ENCODE measurements at regions of chr18 and their contacts with region 1.

Region 1: GRCh38 chr18:23503038-23503962 is at the start of gene RMC1:
- DNase-seq: peak; percentile 98
- H3K4me3 Mint-ChIP-seq: peak within 1 kb of the TSS; percentile 96
- H3K27ac Mint-ChIP-seq: peak within 1 kb of the TSS; percentile 87
- H3K4me1 Mint-ChIP-seq: peaks cover 17% of the 10 kb centered on the region
- H3K27me3 Mint-ChIP-seq: no peaks in the 10 kb centered on the region
- CTCF ChIP-seq: no peak
- total RNA-seq, gene RMC1: 31.0 and 33.7 TPM in 2 replicates

Region 2: DNA sequence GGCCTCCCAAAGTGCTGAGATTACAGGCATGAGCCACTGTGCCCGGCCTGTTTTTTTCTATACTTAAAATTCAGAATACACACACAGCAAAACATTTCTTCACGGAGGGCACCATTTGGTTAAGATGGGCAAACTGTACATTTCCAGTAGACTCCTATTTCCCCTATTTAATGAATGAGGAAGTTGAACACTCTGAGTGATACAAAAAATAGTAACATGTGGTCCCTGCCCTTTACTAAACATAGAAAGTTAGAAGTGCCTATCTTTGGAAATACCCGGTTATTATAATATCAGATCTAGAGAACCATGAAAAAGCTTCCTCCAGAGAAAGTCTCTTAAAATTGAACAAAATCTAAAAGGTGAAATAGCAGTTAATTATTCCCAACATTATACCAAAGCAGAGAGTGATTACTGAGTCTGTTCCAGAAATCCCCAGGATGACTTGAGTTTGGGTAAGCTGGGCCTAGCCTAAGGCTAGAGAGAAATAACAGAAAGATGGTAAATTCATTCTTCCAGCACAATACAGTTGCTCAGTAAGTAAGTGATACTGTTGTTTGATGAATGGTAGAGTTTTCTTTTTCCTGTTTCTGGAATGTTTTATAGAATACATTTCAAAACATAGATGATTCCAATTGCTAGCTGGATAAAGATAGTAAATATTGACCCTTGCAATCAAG is 23.3 kb before region 1 on chr18:
- CTCF ChIA-PET with region 1: no interaction called
- intact Hi-C with region 1: no loop called
- DNase-seq: no peak
- H3K4me3 Mint-ChIP-seq: no peak overlapping the region
- H3K27ac Mint-ChIP-seq: no peak overlapping the region
- H3K4me1 Mint-ChIP-seq: no peaks in the 10 kb centered on the region
- H3K27me3 Mint-ChIP-seq: no peaks in the 10 kb centered on the region
- CTCF ChIP-seq: no peak

Region 3: GRCh38 chr18:23547846-23548245 is 44.5 kb after region 1 on chr18:
- CTCF ChIA-PET with region 1: no interaction called
- intact Hi-C with region 1: no loop called
- DNase-seq: peak; percentile 54
- H3K4me3 Mint-ChIP-seq: peak overlapping the region; percentile 29
- H3K27ac Mint-ChIP-seq: peak overlapping the region; percentile 62
- H3K4me1 Mint-ChIP-seq: peaks cover 36% of the 10 kb centered on the region
- H3K27me3 Mint-ChIP-seq: no peaks in the 10 kb centered on the region
- CTCF ChIP-seq: no peak

Region 4: GRCh38 chr18:23710068-23710527 is 206.8 kb after region 1 on chr18:
- CTCF ChIA-PET with region 1: no interaction called
- intact Hi-C with region 1: loop called (anchors 5 kb)
- DNase-seq: peak; percentile 21
- H3K4me3 Mint-ChIP-seq: peak overlapping the region; percentile 38
- H3K27ac Mint-ChIP-seq: peak overlapping the region; percentile 73
- H3K4me1 Mint-ChIP-seq: peaks cover 11% of the 10 kb centered on the region
- H3K27me3 Mint-ChIP-seq: no peaks in the 10 kb centered on the region
- CTCF ChIP-seq: no peak